AG04449 (cell line): ENCODE measurements at regions of chr5 and their contacts with region 1.

Region 1: DNA sequence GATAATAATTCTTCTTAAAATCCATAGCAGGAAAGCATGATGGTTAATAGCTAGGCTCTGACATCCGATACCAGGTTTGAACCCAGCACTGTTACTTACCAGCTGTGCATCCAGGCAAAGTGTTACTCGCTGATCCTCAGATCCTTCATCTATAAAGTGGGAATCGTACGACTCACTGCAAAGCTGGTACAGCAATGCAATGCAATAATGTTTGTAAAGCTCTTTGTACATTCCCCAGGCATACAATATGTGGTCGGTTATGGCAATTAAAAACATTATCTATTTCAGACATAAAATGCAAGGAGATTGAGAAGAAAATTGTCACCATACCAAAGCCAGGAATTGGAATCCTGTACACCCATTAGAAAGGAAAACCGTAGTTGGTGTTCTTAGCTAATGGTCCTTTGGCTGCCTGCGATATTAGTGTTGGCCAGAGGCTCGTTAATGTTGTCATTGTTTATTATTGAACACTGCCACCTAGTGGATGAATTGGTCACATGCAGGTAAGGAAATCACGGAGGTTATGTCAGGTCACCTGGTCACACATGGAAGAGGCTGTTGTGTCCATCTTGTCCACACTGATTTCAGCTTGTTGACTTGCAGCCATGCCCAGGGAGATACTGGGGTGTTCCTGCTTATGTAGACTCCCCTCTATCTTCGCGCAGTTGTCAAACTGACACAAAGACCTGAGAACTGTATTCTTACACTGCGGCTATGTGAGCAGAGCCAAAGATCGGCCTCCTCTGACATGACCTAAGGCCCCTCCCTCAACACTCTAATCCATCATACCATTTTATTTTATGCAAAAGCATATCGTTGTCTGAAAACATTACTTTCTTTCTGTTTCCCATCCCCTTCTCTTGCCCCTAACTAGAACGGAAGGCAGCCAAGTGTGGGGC is 87.5 kb upstream of the PPP2R2B start:
- DNase-seq: peak; percentile 23
- H3K4me3 ChIP-seq: no peak overlapping the region
- CTCF ChIP-seq: peak; percentile 59

Region 2: DNA sequence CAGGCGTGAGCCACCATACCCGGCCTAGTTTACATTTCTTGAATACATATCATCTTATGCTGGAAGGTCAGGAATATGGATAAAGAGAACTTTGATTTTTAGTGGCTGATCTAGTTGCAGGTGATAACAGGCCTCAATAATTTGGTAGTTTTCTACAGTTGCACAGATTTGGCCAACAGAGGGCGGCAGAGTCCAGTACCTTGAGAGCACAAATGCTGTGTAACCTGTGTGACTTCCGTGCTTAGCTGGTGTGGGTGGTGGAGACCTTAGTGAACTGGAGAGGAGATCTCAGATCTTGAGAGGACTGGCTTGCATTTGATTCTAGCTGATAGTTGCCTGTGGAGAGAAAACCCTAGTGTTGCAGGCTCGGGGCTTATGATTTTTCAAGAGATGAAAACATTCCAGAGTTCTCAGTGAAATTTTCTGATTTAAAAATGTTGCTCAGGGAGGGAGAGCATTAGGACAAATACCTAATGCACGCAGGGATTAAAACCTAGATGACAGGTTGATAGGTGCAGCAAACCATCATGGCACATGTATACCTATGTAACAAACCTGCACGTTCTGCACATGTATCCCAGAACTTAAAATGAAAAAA is 432.7 kb before region 1 on chr5:
- CTCF ChIA-PET with region 1: interaction called, 214 read pairs
- POLR2A ChIA-PET with region 1: no interaction called
- DNase-seq: no peak
- H3K4me3 ChIP-seq: no peak overlapping the region
- CTCF ChIP-seq: peak; percentile 82

Region 3: DNA sequence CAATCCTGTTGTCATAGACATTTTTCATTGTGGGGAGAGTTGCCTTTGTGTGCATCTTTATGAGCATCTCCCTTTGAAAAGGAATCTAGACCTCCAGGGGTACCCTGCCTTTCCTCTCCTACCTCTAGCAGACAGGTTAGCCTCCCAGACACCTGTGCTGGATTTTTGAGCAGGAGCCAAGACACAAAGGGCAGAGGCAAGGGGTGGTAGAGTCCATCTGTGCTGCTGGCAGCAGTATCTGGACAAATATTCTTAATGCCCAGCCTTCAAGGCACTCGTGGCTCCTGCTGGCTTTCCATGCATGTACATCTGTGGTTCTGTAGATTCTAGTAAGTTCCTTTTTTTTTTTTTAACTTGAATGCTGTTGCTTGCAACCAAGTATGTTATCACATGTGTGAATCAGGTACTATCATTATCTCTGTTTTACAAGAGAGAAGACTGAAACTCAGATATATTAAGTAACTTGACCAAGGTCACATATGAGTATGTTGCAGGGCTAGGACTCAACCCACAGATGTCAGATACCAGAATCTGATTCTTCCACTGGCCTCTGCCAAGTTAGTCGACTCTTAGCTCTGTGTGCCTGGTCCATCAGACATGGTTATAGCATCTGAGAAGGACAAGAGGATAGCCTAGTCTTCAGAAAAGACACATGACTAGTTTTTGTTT is 417.1 kb before region 1 on chr5:
- CTCF ChIA-PET with region 1: interaction called, 43 read pairs
- POLR2A ChIA-PET with region 1: no interaction called
- DNase-seq: no peak
- H3K4me3 ChIP-seq: no peak overlapping the region
- CTCF ChIP-seq: no peak

Region 4: GRCh38 chr5:146947181-146947941 is 18.6 kb before region 1 on chr5:
- CTCF ChIA-PET with region 1: interaction called, 12 read pairs
- POLR2A ChIA-PET with region 1: no interaction called
- DNase-seq: no peak
- H3K4me3 ChIP-seq: no peak overlapping the region
- CTCF ChIP-seq: no peak

Region 5: GRCh38 chr5:147751156-147751825 is 785.3 kb after region 1 on chr5:
- CTCF ChIA-PET with region 1: no interaction called
- POLR2A ChIA-PET with region 1: no interaction called
- DNase-seq: no peak
- H3K4me3 ChIP-seq: no peak overlapping the region
- CTCF ChIP-seq: no peak